Activated CD8-positive, alpha-beta memory T cell treated with anti-CD3 and anti-CD28 coated beads, Interleukin-2, amount 10 ng/mL, durations not matched to agents 7 days and 5 days (primary cell): ENCODE measurements at regions of chr5 and their contacts with region 1.

Region 1: GRCh38 chr5:93800988-93801811 is 59.8 kb upstream of the POU5F2 start:
- DNase-seq: no peak
- ATAC-seq: no peak
- H3K4me3 Mint-ChIP-seq: no peak overlapping the region
- H3K27ac Mint-ChIP-seq: no peak overlapping the region
- H3K4me1 Mint-ChIP-seq: peaks cover 4% of the 10 kb centered on the region
- H3K27me3 Mint-ChIP-seq: no peaks in the 10 kb centered on the region

Region 2: DNA sequence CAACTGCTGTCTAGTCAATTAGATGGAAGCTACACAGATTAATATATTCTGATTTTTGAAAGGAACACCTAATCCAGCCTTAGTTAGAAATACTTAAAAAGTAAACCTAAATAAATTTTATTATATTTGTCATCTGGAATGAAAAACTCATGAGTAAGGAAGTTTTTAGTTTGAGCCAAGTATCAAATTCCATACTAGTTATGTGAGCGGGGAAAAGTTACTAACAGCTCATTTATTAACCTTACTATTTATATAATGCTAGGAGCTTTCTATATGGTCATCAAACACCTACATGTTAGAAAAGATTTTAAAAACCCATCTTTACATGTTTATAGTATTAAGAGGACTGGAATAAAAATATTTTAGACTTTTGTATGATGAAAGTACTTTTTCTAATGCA is 18.2 kb before region 1 on chr5:
- CTCF ChIA-PET with region 1: interaction called, 12 read pairs
- DNase-seq: no peak
- ATAC-seq: no peak
- H3K4me3 Mint-ChIP-seq: no peak overlapping the region
- H3K27ac Mint-ChIP-seq: no peak overlapping the region
- H3K4me1 Mint-ChIP-seq: no peaks in the 10 kb centered on the region
- H3K27me3 Mint-ChIP-seq: no peaks in the 10 kb centered on the region